ENCODE measurements at regions of chr16 and their contacts with region 1.

Region 1: GRCh38 chr16:89873972-89874689 is 739 bp downstream of the TCF25 start:
- DNase-seq: peak; percentile 71 to 96
- H3K4me3 ChIP-seq: peak overlapping the region; percentile 65
- H3K27ac ChIP-seq: peak overlapping the region; percentile 93
- H3K4me1 ChIP-seq: peaks cover 11% of the 10 kb centered on the region
- H3K27me3 ChIP-seq: no peaks in the 10 kb centered on the region
- CTCF ChIP-seq: no peak

Region 2: DNA sequence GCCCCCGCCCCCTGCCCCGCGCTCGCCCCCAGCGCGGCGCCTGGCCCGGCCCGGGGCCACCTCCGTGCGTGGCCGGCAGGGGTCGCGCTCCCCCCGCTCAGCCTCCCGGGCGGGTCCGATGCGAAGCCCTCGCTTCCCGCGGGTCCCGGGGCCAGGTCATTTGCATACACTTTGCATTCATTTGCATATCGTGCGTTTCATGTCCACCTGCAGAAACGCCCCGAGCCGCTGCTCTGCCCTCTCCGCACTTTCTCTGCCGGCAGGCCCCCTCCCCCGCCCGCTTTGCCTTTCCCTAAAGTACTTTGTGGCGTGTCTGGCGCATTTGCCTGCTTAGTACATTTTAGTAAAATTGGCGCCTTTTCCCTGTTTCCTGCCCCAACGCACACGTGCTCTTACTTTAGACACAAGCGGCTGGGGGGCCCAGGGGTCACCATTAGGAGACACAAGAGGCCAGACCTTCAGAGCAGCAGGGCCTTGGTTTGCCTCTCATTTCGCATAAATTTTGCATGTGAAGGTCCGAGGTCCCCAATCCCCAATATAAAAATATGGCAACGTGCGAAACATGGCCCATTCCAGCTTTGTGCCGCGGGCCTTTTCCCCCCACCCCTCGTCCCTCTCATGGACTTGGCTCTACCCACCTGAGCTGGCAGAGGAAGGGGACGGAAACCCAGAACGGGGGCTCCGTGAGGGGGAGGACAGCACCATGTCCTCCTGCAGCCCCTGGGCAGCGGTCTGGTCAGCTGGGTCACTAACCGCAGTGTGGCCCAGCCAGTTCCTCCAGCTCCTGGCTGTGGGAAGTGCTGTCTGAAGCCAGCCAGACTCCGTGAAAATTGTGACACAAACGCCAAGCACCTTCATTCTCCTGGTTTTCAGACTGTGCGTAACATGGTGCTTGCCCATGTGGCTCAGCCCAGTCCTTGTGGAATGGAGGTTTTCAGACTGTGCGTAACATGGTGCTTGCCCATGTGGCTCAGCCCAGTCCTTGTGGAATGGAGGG is 931.9 kb before region 1 on chr16:
- CTCF ChIA-PET with region 1: no interaction called
- POLR2A ChIA-PET with region 1: interaction called, 20 read pairs
- intact Hi-C with region 1: no loop called
- DNase-seq: peak in 1 of 2 experiments; percentile 49
- H3K4me3 ChIP-seq: no peak overlapping the region
- H3K27ac ChIP-seq: no peak overlapping the region
- H3K4me1 ChIP-seq: no peaks in the 10 kb centered on the region
- H3K27me3 ChIP-seq: peaks cover 36% of the 10 kb centered on the region
- CTCF ChIP-seq: peak; percentile 46; the same call in 1 of the 2 replicates

Region 3: DNA sequence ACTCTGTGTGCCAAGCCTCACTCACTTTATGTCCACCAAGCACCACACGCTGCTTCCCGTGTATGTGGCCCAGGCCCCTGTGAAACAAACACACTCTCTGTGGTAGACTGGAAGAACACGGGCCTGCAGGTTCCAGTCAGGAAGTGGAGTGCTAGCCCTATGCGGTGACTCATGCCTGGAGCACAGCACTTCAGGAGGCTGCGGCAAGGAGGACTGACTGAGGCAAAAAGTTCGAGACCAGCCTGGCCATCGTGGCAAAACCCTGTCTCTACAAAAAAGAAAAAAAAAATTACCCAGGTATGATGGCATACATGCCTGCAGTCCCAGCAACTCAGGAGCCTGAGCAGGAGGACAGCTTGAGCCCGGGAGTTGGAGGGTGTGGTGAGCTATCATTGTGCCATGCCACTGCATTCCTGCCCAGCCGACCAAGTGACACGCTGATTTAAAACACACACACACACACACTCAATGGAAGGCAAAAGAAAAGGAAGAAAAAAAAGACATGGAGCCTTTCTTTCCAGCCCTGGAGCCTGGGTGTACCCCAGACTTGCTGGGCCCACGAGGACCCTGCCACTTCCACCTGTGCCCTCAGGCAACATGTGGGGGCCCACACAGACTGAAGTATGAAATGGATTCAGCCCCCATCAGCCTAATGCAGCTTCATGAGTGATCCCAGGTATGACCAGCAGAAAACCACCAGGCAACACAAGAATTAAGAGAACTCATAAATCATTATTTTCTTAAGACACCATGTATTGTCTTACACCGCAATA is 510.3 kb before region 1 on chr16:
- CTCF ChIA-PET with region 1: no interaction called
- POLR2A ChIA-PET with region 1: no interaction called
- intact Hi-C with region 1: no loop called
- DNase-seq: peak; percentile 74 to 77
- H3K4me3 ChIP-seq: no peak overlapping the region
- H3K27ac ChIP-seq: peak overlapping the region; percentile 30; the same call in 1 of the 2 replicates
- H3K4me1 ChIP-seq: peaks cover 31% of the 10 kb centered on the region
- H3K27me3 ChIP-seq: no peaks in the 10 kb centered on the region
- CTCF ChIP-seq: no peak

Region 4: DNA sequence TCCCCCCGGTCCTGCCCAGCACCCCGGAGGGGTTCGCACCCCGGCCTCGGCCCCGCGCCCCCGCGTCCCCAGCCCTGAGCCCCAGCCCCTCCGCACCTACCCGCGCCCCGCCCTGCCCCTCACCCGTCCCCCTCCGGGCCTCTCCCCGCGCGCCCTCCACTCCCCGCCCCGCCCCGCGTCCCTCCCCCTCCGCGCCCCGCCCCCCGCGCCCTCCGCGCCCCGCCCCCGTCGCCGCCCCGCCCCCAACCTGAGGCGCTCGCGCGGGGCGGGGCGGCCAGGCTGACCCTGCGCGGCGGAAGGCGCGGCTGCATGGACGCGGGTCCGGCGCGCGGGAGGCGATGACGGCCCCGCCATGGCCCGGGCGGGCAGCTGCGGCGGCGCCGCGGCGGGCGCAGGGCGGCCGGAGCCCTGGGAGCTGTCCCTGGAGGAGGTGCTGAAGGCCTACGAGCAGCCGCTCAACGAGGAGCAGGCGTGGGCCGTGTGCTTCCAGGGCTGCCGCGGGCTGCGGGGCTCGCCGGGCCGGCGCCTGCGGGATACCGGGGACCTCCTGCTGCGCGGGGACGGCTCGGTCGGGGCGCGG is 45.8 kb before region 1 on chr16 and contains the start of gene SPIRE2:
- CTCF ChIA-PET with region 1: no interaction called
- POLR2A ChIA-PET with region 1: interaction called, 29 read pairs
- intact Hi-C with region 1: no loop called
- DNase-seq: peak; percentile 40 to 78
- H3K4me3 ChIP-seq: peak within 1 kb of the TSS; percentile 77
- H3K27ac ChIP-seq: no peak within 1 kb of the TSS
- H3K4me1 ChIP-seq: peaks cover 26% of the 10 kb centered on the region
- H3K27me3 ChIP-seq: no peaks in the 10 kb centered on the region
- CTCF ChIP-seq: no peak
- total RNA-seq, gene SPIRE2: 34.5 and 48.6 TPM in 2 replicates

Region 5: DNA sequence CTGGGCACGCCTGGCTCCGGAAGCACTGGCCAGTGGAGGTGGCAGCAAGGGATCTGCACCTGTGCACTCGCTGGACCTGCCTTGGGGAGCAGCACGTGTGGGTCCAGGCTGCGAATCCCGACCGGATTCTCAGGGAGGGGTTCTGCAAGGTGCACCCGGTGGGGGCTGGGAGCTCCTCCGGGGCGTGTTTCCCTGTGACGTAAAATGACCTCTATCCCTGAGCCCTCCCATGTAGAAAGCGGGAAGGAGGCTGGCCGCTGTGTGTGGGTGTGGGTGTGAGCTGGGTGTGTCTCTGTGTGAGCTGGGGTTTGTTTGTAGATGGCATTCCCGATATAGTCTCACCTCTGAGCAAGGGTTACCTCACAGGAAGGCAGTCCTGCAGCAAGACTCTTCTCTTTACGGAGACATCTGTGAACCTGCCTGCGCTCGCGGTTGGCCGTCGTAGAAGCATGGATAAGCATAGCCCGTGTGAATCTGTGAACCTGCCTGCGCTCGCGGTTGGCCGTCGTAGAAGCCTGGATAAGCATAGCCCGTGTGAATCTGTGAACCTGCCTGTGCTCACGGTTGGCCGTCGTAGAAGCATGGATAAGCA is 40.4 kb before region 1 on chr16:
- CTCF ChIA-PET with region 1: interaction called, 16 read pairs
- POLR2A ChIA-PET with region 1: interaction called, 6 read pairs
- intact Hi-C with region 1: no loop called
- DNase-seq: peak; percentile 92 to 94
- H3K4me3 ChIP-seq: no peak overlapping the region
- H3K27ac ChIP-seq: peak overlapping the region; percentile 53
- H3K4me1 ChIP-seq: peaks cover 62% of the 10 kb centered on the region
- H3K27me3 ChIP-seq: no peaks in the 10 kb centered on the region
- CTCF ChIP-seq: no peak

Region 6: DNA sequence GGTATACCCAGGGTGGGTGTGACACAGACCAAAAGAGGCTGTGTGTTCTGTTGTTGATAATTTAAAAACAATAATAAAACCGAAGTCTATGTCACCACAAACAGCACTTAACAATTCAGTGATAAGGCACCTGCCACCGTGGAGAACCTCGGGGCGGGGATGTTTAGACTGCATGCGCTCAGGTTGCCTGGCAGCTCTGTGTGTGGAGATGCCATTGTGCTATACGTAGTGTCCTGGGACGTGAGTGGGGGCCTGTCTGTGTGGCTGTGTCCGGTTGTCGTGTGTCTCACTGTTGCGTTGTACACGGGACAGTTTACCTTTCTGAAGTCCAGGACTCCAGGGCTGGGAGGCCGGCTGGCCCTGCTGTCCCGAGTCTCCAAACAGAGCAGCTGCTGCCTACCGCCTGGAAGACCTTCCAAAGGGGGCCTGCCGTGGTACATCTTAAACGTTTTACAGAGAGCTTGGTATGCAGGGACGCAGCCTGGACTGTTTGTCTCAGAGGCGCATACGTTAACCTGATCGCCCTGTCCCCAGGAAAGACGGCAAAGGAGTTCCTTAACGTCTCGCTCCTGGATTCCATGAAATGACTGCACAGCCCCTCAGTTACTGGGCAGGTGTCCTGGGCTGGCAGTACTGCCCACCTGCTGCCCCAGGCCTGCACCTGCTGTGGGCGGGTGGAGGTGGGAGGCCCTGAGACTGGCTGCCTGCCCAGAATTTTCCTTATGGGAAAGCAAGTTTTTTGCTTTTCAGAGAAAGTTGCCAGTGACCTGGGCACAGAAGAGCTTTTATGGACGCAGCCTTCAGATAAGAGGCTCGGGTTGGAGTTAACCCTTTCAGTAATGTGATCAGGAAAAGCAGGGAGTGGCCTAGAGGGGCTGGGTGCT is 26.8 kb before region 1 on chr16:
- CTCF ChIA-PET with region 1: no interaction called
- POLR2A ChIA-PET with region 1: no interaction called
- intact Hi-C with region 1: no loop called
- DNase-seq: no peak
- H3K4me3 ChIP-seq: no peak overlapping the region
- H3K27ac ChIP-seq: no peak overlapping the region
- H3K4me1 ChIP-seq: no peaks in the 10 kb centered on the region
- H3K27me3 ChIP-seq: no peaks in the 10 kb centered on the region
- CTCF ChIP-seq: no peak

Region 7: DNA sequence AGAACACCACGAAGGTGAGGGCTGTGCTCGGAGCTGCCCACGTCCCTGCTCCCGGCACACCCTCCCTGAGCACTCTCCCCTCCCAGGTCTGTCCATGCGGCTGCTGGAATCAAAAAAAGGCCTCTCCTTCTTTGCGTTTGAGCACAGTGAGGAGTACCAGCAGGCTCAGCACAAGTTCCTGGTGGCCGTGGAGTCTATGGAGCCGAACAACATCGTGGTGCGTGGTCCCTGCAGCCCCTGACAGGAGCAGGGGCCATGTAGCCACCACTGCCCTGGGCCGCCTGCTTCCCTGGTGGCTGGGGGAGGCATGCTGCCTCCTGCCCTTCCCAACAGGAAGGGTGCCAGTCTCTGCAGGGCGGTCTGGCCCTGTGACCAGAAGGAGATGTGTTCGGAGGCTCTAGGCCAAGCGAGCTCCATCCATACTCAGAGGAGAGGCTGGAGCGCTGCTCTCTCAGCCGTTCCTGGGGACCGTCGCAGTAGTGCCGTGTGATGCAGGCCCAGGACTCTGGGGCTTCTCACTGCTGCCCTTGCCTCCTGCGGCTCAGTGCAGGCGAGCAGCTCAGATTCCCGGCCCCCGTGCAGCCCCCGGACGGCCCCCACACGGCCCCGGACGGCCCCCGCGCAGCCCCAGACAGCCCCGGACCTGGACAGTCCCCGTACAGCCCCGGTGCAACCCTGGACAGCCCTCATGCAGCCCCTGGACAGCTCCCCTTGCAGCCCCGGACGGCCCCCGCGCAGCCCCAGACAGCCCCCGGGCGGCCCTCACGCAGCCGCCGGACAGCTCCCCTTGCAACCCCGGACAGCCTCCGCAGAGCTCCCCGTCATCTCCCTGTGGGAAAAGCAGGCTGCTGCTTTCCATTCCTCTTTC is 19.7 kb after region 1 on chr16:
- CTCF ChIA-PET with region 1: no interaction called
- POLR2A ChIA-PET with region 1: no interaction called
- intact Hi-C with region 1: no loop called
- DNase-seq: no peak
- H3K4me3 ChIP-seq: no peak overlapping the region
- H3K27ac ChIP-seq: no peak overlapping the region
- H3K4me1 ChIP-seq: no peaks in the 10 kb centered on the region
- H3K27me3 ChIP-seq: no peaks in the 10 kb centered on the region
- CTCF ChIP-seq: no peak

Measured in PC-9 (cell line).